ENCODE measurements at regions of chr3 and their contacts with region 1.

Region 1: DNA sequence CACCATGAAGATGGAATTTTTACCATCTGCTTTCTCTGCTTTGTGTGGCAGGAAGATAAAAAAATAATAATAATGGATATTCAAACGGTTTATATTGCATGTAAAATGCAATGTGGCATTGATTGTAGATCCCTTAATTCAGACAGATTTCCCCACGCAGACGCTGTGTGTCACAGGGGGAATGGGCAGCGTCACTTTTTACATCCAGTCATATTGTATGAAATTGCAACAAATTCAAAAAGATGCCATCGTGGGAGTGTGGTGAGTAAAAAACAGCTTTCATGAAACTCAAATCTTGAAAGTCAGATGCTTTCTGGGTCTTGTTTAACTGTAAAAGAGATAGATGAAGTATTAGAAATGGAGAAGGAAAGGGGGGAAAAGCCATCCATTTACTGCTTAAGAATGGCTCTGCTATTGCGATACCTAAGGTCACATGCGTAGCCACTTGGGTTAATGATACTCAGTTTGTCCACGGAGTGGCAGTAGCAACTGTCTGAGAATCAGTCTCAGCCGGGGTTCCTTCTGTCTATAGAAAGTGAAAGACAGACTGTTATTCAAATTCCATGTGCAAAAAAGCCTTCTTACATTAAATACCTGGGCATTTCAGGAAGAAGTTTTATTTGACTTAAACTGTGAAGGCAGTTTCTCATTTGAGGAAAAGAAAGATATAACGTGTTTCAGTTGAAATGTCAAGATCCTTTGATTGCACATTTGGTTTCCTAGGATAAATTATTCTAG is 28.5 kb downstream of the BTD start:
- DNase-seq: peak; percentile 89
- ATAC-seq: peak; percentile 80
- H3K4me3 ChIP-seq: peak overlapping the region; percentile 46; the same call in 1 of the 2 replicates
- H3K27ac ChIP-seq: peak overlapping the region; percentile 10; the same call in 1 of the 2 replicates
- H3K4me1 ChIP-seq: peaks cover 22% of the 10 kb centered on the region
- H3K27me3 ChIP-seq: no peaks in the 10 kb centered on the region
- CTCF ChIP-seq: peak; percentile 84
- POLR2A ChIP-seq: peak; percentile 39; the same call in 1 of the 2 replicates
- RAD21 ChIP-seq: peak; percentile 91

Region 2: GRCh38 chr3:15405448-15406050 is 224.5 kb before region 1 on chr3:
- CTCF ChIA-PET with region 1: no interaction called
- POLR2A ChIA-PET with region 1: no interaction called
- dilution Hi-C with region 1: no loop called
- in situ Hi-C with region 1: no loop called
- intact Hi-C with region 1: no loop called
- DNase-seq: peak; percentile 71
- ATAC-seq: peak; percentile 77
- H3K4me3 ChIP-seq: no peak overlapping the region
- H3K27ac ChIP-seq: no peak overlapping the region
- H3K4me1 ChIP-seq: no peaks in the 10 kb centered on the region
- H3K27me3 ChIP-seq: no peaks in the 10 kb centered on the region
- CTCF ChIP-seq: peak; percentile 65
- POLR2A ChIP-seq: no peak
- RAD21 ChIP-seq: peak; percentile 68

Region 3: DNA sequence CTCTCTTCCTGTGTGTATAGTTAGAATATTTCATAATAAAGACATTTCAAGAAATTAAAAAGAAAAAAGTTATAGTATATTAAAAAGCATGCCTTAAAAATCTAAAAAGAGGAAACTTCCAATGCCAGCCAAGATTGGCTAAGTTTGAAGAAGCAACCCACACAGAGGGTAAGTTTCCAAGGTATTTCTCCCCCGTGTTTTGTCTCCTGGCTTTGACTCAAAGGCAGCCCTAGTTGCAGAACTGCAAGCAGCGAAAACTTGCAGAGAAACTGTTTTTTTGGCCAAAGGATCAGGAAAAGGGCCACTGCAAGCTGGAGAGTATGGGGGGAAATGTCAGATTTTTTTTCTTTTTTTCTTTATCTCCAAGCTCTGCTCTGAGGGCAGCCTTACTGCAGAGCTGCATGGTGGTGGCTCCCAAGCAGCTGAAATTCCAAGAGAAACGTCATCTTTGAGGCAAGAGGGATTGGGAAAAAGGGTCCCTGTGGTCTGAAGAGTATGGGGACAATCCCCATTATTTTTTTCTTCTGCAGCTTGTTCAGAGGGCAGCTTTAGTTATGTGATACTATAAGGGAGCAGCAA is 51.7 kb before region 1 on chr3:
- CTCF ChIA-PET with region 1: no interaction called
- POLR2A ChIA-PET with region 1: no interaction called
- dilution Hi-C with region 1: no loop called
- in situ Hi-C with region 1: no loop called
- intact Hi-C with region 1: no loop called
- DNase-seq: no peak
- ATAC-seq: no peak
- H3K4me3 ChIP-seq: no peak overlapping the region
- H3K27ac ChIP-seq: no peak overlapping the region
- H3K4me1 ChIP-seq: no peaks in the 10 kb centered on the region
- H3K27me3 ChIP-seq: no peaks in the 10 kb centered on the region
- CTCF ChIP-seq: no peak
- POLR2A ChIP-seq: no peak
- RAD21 ChIP-seq: no peak

Region 4: GRCh38 chr3:15647611-15648167 is 17.7 kb after region 1 on chr3:
- CTCF ChIA-PET with region 1: interaction called, 6 read pairs
- POLR2A ChIA-PET with region 1: no interaction called
- dilution Hi-C with region 1: no loop called
- in situ Hi-C with region 1: no loop called
- intact Hi-C with region 1: loop called (anchors 1 kb)
- DNase-seq: peak; percentile 99
- ATAC-seq: peak; percentile 38
- H3K4me3 ChIP-seq: no peak overlapping the region
- H3K27ac ChIP-seq: peak overlapping the region; percentile 98
- H3K4me1 ChIP-seq: peaks cover 22% of the 10 kb centered on the region
- H3K27me3 ChIP-seq: no peaks in the 10 kb centered on the region
- CTCF ChIP-seq: no peak
- POLR2A ChIP-seq: peak; percentile 65
- RAD21 ChIP-seq: peak; percentile 18; the same call in 1 of the 2 replicates

Region 5: DNA sequence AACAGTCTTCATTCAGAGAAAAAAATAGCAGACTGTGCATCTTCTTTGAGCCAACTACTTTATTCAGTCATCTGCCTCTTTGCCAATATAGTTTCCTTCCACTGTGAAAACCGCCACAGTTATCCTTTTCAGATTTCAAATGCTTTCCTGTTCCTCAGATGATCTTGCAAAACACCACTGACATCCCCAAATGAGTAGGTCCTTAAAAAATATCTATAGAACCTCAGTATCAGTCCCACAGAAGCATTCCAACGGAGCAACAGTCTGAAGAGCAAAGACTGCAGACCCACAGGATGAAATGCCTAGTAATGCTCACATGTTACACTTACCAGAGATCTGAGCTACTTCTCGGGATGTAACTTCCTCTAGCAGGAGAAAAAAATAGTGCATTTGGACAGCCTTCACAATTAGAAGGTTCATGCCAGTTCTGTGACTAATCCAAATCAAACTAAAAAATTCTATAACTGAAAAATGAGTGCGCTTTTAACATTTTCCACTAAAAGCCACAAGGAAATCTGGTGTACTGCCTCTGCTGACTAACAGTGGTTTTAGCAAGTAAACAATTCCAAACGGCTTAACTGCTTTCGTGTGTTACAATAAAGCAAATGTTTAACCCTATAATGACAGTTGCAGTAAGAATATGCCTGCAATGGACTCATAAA is 167.7 kb after region 1 on chr3 and contains the start of gene ANKRD28:
- CTCF ChIA-PET with region 1: no interaction called
- POLR2A ChIA-PET with region 1: interaction called, 6 read pairs
- dilution Hi-C with region 1: no loop called
- in situ Hi-C with region 1: no loop called
- intact Hi-C with region 1: loop called (anchors 5 kb)
- DNase-seq: peak; percentile 98
- ATAC-seq: peak; percentile 78
- H3K4me3 ChIP-seq: peak within 1 kb of the TSS; percentile 80
- H3K27ac ChIP-seq: peak within 1 kb of the TSS; percentile 99
- H3K4me1 ChIP-seq: peaks cover 4% of the 10 kb centered on the region; the same call in 1 of the 2 replicates
- H3K27me3 ChIP-seq: no peaks in the 10 kb centered on the region
- CTCF ChIP-seq: 0 out of 2 replicates have a peak, but pooled peaks have one; percentile 19
- POLR2A ChIP-seq: peak; percentile 96
- RAD21 ChIP-seq: peak; percentile 28; the same call in 1 of the 2 replicates
- total RNA-seq, gene ANKRD28: 211 and 223 TPM in 2 replicates

Region 6: GRCh38 chr3:16060358-16060852 is 430.4 kb after region 1 on chr3:
- CTCF ChIA-PET with region 1: no interaction called
- POLR2A ChIA-PET with region 1: no interaction called
- dilution Hi-C with region 1: no loop called
- in situ Hi-C with region 1: loop called (anchors 25 kb)
- intact Hi-C with region 1: no loop called
- DNase-seq: peak; percentile 100
- ATAC-seq: peak; percentile 79
- H3K4me3 ChIP-seq: no peak overlapping the region
- H3K27ac ChIP-seq: peak overlapping the region; percentile 95
- H3K4me1 ChIP-seq: peaks cover 33% of the 10 kb centered on the region
- H3K27me3 ChIP-seq: no peaks in the 10 kb centered on the region
- CTCF ChIP-seq: peak; percentile 45
- POLR2A ChIP-seq: peak; percentile 43; the same call in 1 of the 2 replicates
- RAD21 ChIP-seq: peak; percentile 54

Region 7: GRCh38 chr3:16247276-16248061 is 617.4 kb after region 1 on chr3:
- CTCF ChIA-PET with region 1: no interaction called
- POLR2A ChIA-PET with region 1: no interaction called
- dilution Hi-C with region 1: no loop called
- in situ Hi-C with region 1: loop called (anchors 25 kb)
- intact Hi-C with region 1: loop called (anchors 10 kb)
- DNase-seq: peak; percentile 84
- ATAC-seq: peak; percentile 88
- H3K4me3 ChIP-seq: no peak overlapping the region
- H3K27ac ChIP-seq: no peak overlapping the region
- H3K4me1 ChIP-seq: peaks cover 13% of the 10 kb centered on the region
- H3K27me3 ChIP-seq: no peaks in the 10 kb centered on the region
- CTCF ChIP-seq: peak; percentile 96
- POLR2A ChIP-seq: peak; percentile 50
- RAD21 ChIP-seq: peak; percentile 99

Measured in IMR-90 (cell line).